ENCODE measurements at regions of chr4 and their contacts with region 1.

Region 1: GRCh38 chr4:55444827-55445226 is 49.1 kb downstream of the TMEM165 start:
- DNase-seq: peak; percentile 43
- H3K4me3 Mint-ChIP-seq: no peak overlapping the region
- H3K27ac Mint-ChIP-seq: no peak overlapping the region
- H3K4me1 Mint-ChIP-seq: peaks cover 6% of the 10 kb centered on the region
- H3K27me3 Mint-ChIP-seq: no peaks in the 10 kb centered on the region
- CTCF ChIP-seq: peak; percentile 55

Region 2: DNA sequence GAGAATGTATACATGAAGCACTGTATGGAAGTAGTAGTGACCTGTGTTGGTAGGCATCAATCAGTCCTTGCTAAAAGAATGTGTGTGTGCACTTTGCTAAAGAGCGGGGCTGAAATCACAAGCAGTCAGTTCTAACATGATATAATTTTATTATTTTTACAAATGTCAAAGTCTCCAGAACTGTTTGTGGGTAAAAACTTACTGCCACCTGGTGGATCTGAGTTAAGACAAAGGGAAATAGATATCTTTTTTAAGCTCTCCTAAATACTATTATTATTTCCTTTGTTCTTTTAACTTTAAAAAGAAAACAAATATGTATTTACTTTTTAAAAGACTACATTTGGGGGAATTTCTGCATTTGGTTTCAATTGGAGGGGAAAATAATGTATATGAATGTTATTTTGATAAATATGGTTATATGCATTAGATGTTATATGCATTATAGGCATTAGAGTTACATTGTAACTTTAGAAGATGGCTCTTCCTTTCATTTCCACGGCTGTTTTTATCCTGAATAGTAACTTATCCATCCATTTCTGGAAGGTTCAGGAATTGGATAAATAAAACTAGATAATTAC is 109.7 kb after region 1 on chr4:
- CTCF ChIA-PET with region 1: interaction called, 9 read pairs
- POLR2A ChIA-PET with region 1: interaction called, 4 read pairs
- intact Hi-C with region 1: loop called (anchors 1 kb)
- DNase-seq: peak; percentile 48
- H3K4me3 Mint-ChIP-seq: no peak overlapping the region
- H3K27ac Mint-ChIP-seq: no peak overlapping the region
- H3K4me1 Mint-ChIP-seq: peaks cover 11% of the 10 kb centered on the region
- H3K27me3 Mint-ChIP-seq: no peaks in the 10 kb centered on the region
- CTCF ChIP-seq: peak; percentile 32

Region 3: GRCh38 chr4:55635741-55636655 is 191.2 kb after region 1 on chr4 and contains the start of gene NMU:
- CTCF ChIA-PET with region 1: interaction called, 32 read pairs
- POLR2A ChIA-PET with region 1: no interaction called
- intact Hi-C with region 1: loop called (anchors 1 kb)
- DNase-seq: peak; percentile 82
- H3K4me3 Mint-ChIP-seq: peak within 1 kb of the TSS; percentile 71
- H3K27ac Mint-ChIP-seq: no peak within 1 kb of the TSS
- H3K4me1 Mint-ChIP-seq: peaks cover 23% of the 10 kb centered on the region
- H3K27me3 Mint-ChIP-seq: no peaks in the 10 kb centered on the region
- CTCF ChIP-seq: peak; percentile 17
- total RNA-seq, gene NMU: 4.7 and 8.5 TPM in 2 replicates

Region 4: GRCh38 chr4:55661398-55662056 is 216.7 kb after region 1 on chr4:
- CTCF ChIA-PET with region 1: no interaction called
- POLR2A ChIA-PET with region 1: no interaction called
- intact Hi-C with region 1: no loop called
- DNase-seq: no peak
- H3K4me3 Mint-ChIP-seq: no peak overlapping the region
- H3K27ac Mint-ChIP-seq: no peak overlapping the region
- H3K4me1 Mint-ChIP-seq: no peaks in the 10 kb centered on the region
- H3K27me3 Mint-ChIP-seq: no peaks in the 10 kb centered on the region
- CTCF ChIP-seq: no peak